Activated CD4-positive, alpha-beta T cell treated with anti-CD3 and anti-CD28 coated beads for 36 hours (primary cell): ENCODE measurements at regions of chr15 and their contacts with region 1.

Region 1: GRCh38 chr15:73633111-73633990 is at the start of gene NPTN:
- DNase-seq: peak; percentile 99
- ATAC-seq: peak; percentile 91
- H3K4me3 Mint-ChIP-seq: peak within 1 kb of the TSS; percentile 86
- H3K27ac Mint-ChIP-seq: peak within 1 kb of the TSS; percentile 71
- H3K4me1 Mint-ChIP-seq: peaks cover 52% of the 10 kb centered on the region
- H3K27me3 Mint-ChIP-seq: peaks cover 14% of the 10 kb centered on the region
- total RNA-seq, gene NPTN: 43.5 to 73.4 TPM

Region 2: GRCh38 chr15:73051811-73052678 is 581.3 kb before region 1 on chr15 and contains the start of gene NEO1:
- CTCF ChIA-PET with region 1: no interaction called
- POLR2A ChIA-PET with region 1: no interaction called
- intact Hi-C with region 1: loop called in 1 of 2 experiments (anchors 5 kb)
- DNase-seq: peak; percentile 87
- ATAC-seq: peak; percentile 80
- H3K4me3 Mint-ChIP-seq: peak within 1 kb of the TSS; percentile 74
- H3K27ac Mint-ChIP-seq: peak within 1 kb of the TSS; percentile 53
- H3K4me1 Mint-ChIP-seq: peaks cover 6% of the 10 kb centered on the region
- H3K27me3 Mint-ChIP-seq: peaks cover 16% of the 10 kb centered on the region
- total RNA-seq, gene NEO1: 6.6 to 8.0 TPM

Region 3: DNA sequence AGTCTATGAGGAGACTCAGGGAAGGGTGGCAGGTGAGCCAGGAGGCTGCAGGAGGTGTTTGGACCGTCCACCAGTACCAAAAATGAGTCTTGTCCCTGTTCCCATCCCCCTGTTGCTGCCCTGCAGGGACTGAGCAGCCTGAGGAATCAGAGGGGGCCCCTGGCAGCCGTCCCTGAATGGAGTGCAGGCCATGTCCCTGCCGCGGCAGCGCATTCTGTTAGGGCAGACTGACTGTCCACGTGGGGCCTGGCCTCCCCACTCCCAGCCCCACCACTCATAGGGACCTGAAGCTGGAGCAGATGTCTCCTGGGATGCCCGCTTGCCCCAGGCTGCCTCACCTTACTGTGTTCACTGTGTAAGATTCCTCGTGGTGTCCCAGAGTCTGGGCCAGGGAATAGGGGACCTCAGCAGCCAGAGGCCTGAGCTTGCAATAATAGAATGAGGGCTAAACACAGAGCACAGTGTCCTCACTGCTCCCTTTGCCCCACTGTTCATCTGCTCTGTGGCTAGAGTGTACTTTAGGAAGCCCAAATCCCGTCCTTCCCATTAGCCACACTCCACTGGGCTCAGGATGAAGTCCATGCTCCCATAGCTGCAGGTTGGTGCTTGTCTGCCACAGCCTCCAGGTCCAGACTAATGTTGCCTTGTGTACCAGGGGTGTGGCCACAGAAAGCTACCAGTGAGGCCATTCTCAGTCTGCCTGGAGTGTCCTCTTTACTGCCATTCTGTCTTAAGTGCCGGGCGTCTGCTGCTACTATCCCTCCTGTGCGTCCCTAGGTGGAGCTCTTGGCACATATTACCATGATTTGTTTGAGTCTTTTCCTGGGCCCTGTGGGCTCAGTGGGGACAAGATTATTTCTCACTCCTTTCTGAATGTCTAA is 327.8 kb before region 1 on chr15:
- CTCF ChIA-PET with region 1: no interaction called
- POLR2A ChIA-PET with region 1: no interaction called
- intact Hi-C with region 1: loop called (anchors 1 to 10 kb)
- DNase-seq: peak; percentile 54
- ATAC-seq: peak; percentile 60
- H3K4me3 Mint-ChIP-seq: no peak overlapping the region
- H3K27ac Mint-ChIP-seq: no peak overlapping the region
- H3K4me1 Mint-ChIP-seq: no peaks in the 10 kb centered on the region
- H3K27me3 Mint-ChIP-seq: no peaks in the 10 kb centered on the region

Region 4: GRCh38 chr15:73617301-73617831 is 16.0 kb before region 1 on chr15:
- CTCF ChIA-PET with region 1: interaction called, 121 read pairs
- POLR2A ChIA-PET with region 1: interaction called, 3 read pairs
- intact Hi-C with region 1: no loop called
- DNase-seq: no peak
- ATAC-seq: no peak
- H3K4me3 Mint-ChIP-seq: no peak overlapping the region
- H3K27ac Mint-ChIP-seq: no peak overlapping the region
- H3K4me1 Mint-ChIP-seq: peaks cover 52% of the 10 kb centered on the region
- H3K27me3 Mint-ChIP-seq: no peaks in the 10 kb centered on the region

Region 5: DNA sequence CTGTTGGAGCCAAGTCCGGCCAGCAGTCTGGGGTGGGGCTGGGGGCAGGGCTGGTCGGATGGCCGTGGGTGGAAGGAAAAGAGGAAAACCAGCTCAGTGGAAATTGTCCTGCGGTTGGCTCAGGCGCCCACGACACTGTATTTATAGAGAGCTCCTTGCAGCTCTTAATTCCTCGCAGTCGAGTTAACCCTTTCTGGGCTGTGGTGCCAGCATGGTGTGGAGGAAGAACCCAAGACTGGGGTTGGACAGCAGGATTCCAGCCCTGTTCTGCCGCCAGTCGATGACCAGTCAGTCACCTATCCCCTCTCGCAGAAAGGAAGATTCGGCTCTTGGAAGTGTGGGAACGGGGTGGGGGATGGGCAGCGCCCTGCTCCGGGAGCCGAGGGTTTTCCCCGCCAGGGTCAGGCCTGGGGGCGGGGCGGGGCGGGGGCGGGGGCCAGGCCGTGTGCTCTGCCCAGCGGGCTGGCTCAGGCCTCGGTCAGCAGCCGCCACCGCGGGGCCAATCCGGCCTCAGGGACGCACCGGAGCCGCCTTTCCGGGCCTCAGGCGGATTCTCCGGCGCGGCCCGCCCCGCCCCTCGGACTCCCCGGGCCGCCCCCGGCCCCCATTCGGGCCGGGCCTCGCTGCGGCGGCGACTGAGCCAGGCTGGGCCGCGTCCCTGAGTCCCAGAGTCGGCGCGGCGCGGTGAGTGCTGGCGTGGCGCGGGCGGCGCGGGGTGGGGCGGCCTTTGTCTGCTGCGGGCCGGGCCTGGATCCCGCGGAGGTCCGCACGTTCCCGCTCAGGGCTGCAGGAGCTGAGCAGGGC is 50.6 kb after region 1 on chr15 and contains the start of gene CD276:
- CTCF ChIA-PET with region 1: interaction called, 31 read pairs
- POLR2A ChIA-PET with region 1: interaction called, 9 read pairs
- intact Hi-C with region 1: loop called in 1 of 2 experiments (anchors 1 kb)
- DNase-seq: peak; percentile 41
- ATAC-seq: peak; percentile 59
- H3K4me3 Mint-ChIP-seq: peak within 1 kb of the TSS; percentile 59
- H3K27ac Mint-ChIP-seq: peak within 1 kb of the TSS; percentile 32
- H3K4me1 Mint-ChIP-seq: peaks cover 33% of the 10 kb centered on the region
- H3K27me3 Mint-ChIP-seq: peaks cover 58% of the 10 kb centered on the region
- total RNA-seq, gene CD276: 2.6 to 3.0 TPM

Region 6: GRCh38 chr15:73991726-73992593 is 358.6 kb after region 1 on chr15 and contains the start of gene STOML1:
- CTCF ChIA-PET with region 1: no interaction called
- POLR2A ChIA-PET with region 1: no interaction called
- intact Hi-C with region 1: loop called in 1 of 2 experiments (anchors 10 kb)
- DNase-seq: peak; percentile 96
- ATAC-seq: peak; percentile 74
- H3K4me3 Mint-ChIP-seq: peak within 1 kb of the TSS; percentile 74
- H3K27ac Mint-ChIP-seq: peak within 1 kb of the TSS; percentile 86
- H3K4me1 Mint-ChIP-seq: peaks cover 42% of the 10 kb centered on the region
- H3K27me3 Mint-ChIP-seq: no peaks in the 10 kb centered on the region
- total RNA-seq, gene STOML1: 6.3 to 7.1 TPM